ENCODE measurements at regions of chr6 and their contacts with region 1.

Region 1: GRCh38 chr6:11653028-11653583 is 115.6 kb downstream of the TMEM170B start:
- DNase-seq: peak; percentile 97
- H3K4me3 ChIP-seq: no peak overlapping the region
- H3K27ac ChIP-seq: peak overlapping the region; percentile 99
- H3K4me1 ChIP-seq: peaks cover 66% of the 10 kb centered on the region
- H3K27me3 ChIP-seq: no peaks in the 10 kb centered on the region
- CTCF ChIP-seq: no peak
- POLR2A ChIP-seq: peak; percentile 71

Region 2: DNA sequence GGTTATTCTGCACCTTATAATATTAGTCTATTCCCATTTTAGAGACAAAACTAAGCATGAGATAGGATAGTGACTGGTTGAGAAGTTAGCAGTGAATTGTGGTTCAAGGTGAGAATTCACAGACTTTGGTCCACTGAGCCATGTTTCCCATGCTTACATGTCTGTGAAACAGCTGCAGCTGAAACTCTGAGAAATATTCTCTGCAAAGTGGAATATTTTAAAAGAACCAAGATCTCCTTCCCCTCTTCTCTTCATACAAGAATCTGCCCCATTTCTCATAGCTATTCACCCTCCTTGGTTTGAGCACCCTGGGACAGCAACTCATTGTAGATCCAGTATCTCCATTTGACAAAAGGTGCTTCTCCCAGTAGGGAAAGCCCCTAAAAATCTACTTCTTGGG is 185.7 kb before region 1 on chr6:
- CTCF ChIA-PET with region 1: no interaction called
- POLR2A ChIA-PET with region 1: no interaction called
- dilution Hi-C with region 1: no loop called
- intact Hi-C with region 1: no loop called
- DNase-seq: no peak
- H3K4me3 ChIP-seq: no peak overlapping the region
- H3K27ac ChIP-seq: no peak overlapping the region
- H3K4me1 ChIP-seq: no peaks in the 10 kb centered on the region
- H3K27me3 ChIP-seq: peaks cover 2 to 5% of the 10 kb centered on the region in 2 experiments
- CTCF ChIP-seq: no peak
- POLR2A ChIP-seq: no peak

Region 3: DNA sequence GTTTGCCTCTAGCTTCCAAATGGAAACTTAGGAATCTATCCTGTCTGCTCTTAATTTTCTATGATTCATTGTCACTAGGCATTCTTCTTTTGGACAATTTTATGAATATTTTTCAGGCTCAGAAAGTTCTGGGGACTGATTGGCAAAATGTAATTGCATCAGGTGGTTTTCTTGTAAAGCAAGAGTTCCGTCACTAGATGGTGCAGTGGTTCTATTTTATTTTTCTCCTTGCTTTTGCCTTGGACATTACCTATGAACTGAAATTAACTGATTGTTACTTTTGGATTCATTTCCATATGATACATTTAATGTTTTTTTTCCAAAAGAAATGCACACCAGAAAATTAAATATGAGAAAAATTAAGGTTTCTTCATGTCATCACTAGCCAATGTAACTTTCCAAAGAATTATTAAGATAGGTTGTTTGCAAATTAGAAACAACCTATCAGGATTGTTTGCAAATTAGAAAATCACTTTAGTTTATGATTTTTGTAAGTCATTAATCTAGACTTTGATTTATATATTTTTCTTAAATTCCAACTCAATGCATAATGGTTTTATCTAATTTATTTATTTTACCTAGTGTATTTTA is 67.6 kb before region 1 on chr6:
- CTCF ChIA-PET with region 1: interaction called, 55 read pairs
- POLR2A ChIA-PET with region 1: interaction called, 11 read pairs
- dilution Hi-C with region 1: no loop called
- intact Hi-C with region 1: loop called (anchors 1 kb)
- DNase-seq: peak; percentile 83
- H3K4me3 ChIP-seq: no peak overlapping the region
- H3K27ac ChIP-seq: peak overlapping the region; percentile 79
- H3K4me1 ChIP-seq: peaks cover 29% of the 10 kb centered on the region
- H3K27me3 ChIP-seq: no peaks in the 10 kb centered on the region
- CTCF ChIP-seq: peak; percentile 41 to 42
- POLR2A ChIP-seq: no peak

Region 4: GRCh38 chr6:11770546-11771466 is 117.7 kb after region 1 on chr6:
- CTCF ChIA-PET with region 1: interaction called, 10 read pairs
- POLR2A ChIA-PET with region 1: interaction called, 3 read pairs
- dilution Hi-C with region 1: no loop called
- intact Hi-C with region 1: loop called (anchors 1 kb)
- DNase-seq: peak; percentile 93
- H3K4me3 ChIP-seq: no peak overlapping the region
- H3K27ac ChIP-seq: peak overlapping the region; percentile 94
- H3K4me1 ChIP-seq: peaks cover 58% of the 10 kb centered on the region
- H3K27me3 ChIP-seq: no peaks in the 10 kb centered on the region
- CTCF ChIP-seq: no peak
- POLR2A ChIP-seq: peak; percentile 84

Region 5: DNA sequence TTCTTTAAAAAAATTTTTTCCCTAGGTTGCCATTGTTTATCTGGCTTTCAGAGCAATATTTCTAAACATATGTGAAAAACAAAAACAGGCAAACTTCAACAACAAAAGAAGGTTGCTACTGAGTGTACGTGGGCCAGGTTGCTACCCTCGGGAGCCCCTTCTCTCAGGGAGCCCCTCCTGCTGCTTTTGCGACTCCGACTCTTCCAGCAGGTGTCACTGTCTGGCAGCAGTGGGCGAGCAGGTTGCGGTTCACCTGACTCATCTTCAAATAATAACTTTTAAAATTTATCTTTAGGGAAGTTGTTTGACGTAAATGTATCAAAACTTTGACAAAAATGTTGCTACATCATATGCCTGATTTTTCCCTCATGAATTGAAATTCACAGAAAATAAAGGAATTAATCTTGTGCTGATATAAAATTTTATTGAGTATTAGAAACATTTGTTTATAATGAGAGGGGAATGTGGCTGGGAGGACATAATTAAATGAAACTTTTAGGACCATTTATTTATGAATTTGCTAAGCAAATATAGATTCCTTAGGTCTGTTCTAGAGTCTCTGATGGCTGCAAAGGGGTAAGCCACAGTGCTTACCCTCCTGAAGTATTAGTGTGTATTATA is 497.8 kb after region 1 on chr6:
- CTCF ChIA-PET with region 1: interaction called, 4 read pairs
- POLR2A ChIA-PET with region 1: no interaction called
- dilution Hi-C with region 1: no loop called
- intact Hi-C with region 1: loop called (anchors 2 kb)
- DNase-seq: no peak
- H3K4me3 ChIP-seq: no peak overlapping the region
- H3K27ac ChIP-seq: no peak overlapping the region
- H3K4me1 ChIP-seq: peaks cover 24% of the 10 kb centered on the region
- H3K27me3 ChIP-seq: no peaks in the 10 kb centered on the region
- CTCF ChIP-seq: peak in 1 of 2 donors; percentile 28
- POLR2A ChIP-seq: no peak

Region 6: GRCh38 chr6:12324514-12325147 is 671.5 kb after region 1 on chr6:
- CTCF ChIA-PET with region 1: interaction called, 3 read pairs
- POLR2A ChIA-PET with region 1: no interaction called
- dilution Hi-C with region 1: no loop called
- intact Hi-C with region 1: loop called (anchors 1 kb)
- DNase-seq: no peak
- H3K4me3 ChIP-seq: no peak overlapping the region
- H3K27ac ChIP-seq: peak overlapping the region; percentile 60
- H3K4me1 ChIP-seq: peaks cover 17% of the 10 kb centered on the region
- H3K27me3 ChIP-seq: no peaks in the 10 kb centered on the region
- CTCF ChIP-seq: no peak
- POLR2A ChIP-seq: peak; percentile 40

Region 7: DNA sequence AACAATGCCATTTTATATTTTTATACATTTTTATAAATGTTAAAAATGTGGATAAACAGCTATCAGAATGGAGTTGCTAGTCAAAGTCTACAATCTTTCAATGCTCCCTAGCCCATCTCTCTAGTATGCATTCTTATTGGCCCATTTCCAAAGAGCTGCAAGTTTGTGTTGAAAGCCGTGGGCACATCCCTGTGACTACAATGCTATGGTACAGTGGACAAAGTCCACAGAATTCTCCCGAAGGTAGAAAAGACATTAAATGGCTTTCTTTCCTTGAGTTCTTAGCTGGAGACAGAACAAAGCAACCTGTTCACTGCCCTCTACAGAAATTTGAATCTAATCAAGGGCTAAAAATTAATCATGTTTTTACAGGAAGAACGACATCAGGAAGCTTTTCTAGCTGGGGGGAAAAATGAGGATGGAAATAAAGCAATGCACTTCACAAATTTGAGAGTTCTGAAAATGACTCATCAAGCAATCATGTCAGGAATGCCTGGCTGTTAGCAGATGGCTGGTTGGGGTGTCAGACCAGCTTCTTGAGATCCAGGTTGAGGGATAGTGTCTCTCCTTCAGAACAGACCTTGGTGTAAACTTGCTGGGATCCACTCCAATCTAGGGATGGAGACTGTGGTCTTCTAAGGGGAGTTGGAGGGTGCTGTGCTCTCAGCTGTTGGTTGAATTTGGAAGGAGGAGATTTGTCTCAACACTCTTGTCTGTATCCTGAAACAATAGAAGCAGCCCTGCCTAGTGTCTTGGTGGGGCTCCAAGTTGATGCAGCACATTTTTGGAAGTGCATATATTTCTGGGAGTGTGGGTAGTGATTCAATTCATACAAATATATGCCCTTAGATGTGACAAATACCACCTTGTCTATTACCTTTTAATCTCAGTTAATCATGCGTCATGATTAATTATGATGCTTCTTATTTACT is 920.1 kb after region 1 on chr6:
- CTCF ChIA-PET with region 1: interaction called, 3 read pairs
- POLR2A ChIA-PET with region 1: no interaction called
- dilution Hi-C with region 1: no loop called
- intact Hi-C with region 1: loop called (anchors 1 kb)
- DNase-seq: peak; percentile 92
- H3K4me3 ChIP-seq: peak overlapping the region in 1 of 3 experiments; percentile 13
- H3K27ac ChIP-seq: peak overlapping the region; percentile 92
- H3K4me1 ChIP-seq: peaks cover 75% of the 10 kb centered on the region
- H3K27me3 ChIP-seq: no peaks in the 10 kb centered on the region
- CTCF ChIP-seq: no peak
- POLR2A ChIP-seq: no peak

Measured in endothelial cell of umbilical vein (primary cell).